Activated CD8-positive, alpha-beta T cell treated with anti-CD3 and anti-CD28 coated beads, Interleukin-2, amount 10 ng/mL, durations not matched to agents 7 days and 5 days (primary cell): ENCODE measurements at regions of chr9 and their contacts with region 1.

Region 1: DNA sequence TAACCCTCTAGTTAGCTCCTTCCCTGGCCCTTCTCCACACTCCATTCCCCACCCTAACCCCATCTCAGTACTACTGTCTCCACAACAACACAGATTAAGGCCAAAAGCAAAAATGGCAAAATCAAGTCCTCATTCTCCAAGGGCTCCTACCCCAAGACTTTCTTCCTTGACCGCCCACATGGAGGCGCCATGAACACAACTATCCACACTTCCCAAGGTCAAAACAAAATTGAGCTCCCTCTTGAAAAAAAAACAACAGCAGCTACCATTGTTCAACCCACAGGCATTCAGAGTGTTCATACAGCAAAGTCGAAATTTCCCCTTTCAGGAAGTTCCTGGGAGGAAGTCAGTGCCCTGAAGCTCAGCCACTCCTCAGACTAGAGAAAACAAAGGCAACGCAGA is 54.4 kb downstream of the GNAQ start:
- DNase-seq: peak; percentile 69
- ATAC-seq: peak; percentile 48
- H3K4me3 Mint-ChIP-seq: peak overlapping the region; percentile 9
- H3K27ac Mint-ChIP-seq: peak overlapping the region; percentile 67
- H3K4me1 Mint-ChIP-seq: peaks cover 56% of the 10 kb centered on the region
- H3K27me3 Mint-ChIP-seq: no peaks in the 10 kb centered on the region

Region 2: GRCh38 chr9:77949751-77950436 is 27.3 kb before region 1 on chr9:
- CTCF ChIA-PET with region 1: interaction called, 14 read pairs
- POLR2A ChIA-PET with region 1: no interaction called
- DNase-seq: no peak
- ATAC-seq: no peak
- H3K4me3 Mint-ChIP-seq: no peak overlapping the region
- H3K27ac Mint-ChIP-seq: no peak overlapping the region
- H3K4me1 Mint-ChIP-seq: peaks cover 15% of the 10 kb centered on the region
- H3K27me3 Mint-ChIP-seq: no peaks in the 10 kb centered on the region

Region 3: DNA sequence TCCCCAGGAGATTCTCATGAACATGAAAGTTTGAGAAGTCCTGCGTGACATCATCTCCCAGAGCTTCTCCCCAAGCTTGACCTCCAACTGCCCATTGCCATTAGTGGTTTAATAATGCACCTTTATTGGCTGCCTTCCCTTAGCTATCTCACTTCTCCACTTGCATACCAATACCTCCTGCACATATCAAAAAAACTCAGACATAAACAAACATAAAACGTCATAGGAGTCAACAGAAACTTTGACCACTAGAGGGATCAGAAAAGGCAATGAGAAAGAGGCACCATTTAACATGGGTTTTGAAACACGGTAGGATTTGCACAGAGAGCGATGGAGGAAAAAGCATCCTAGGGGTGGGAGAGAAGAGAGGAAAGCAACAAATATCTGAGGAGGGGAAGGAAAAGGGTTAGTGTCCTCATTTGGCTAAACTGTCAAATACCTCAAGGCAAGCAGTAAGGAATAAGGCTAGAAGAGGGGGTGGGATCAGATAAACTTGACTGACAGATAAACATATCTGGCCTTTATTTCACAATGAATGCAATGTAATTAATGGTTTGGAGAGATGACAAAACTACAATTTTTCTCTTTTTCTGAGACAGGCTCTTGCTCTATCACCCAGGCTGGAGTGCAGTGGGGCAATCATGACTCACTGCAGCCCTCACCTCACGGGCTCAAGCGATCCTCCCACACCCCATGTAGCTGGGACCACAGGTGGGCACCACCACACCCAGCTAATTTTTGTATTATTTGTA is 27.4 kb after region 1 on chr9:
- CTCF ChIA-PET with region 1: interaction called, 10 read pairs
- POLR2A ChIA-PET with region 1: no interaction called
- DNase-seq: no peak
- ATAC-seq: no peak
- H3K4me3 Mint-ChIP-seq: no peak overlapping the region
- H3K27ac Mint-ChIP-seq: no peak overlapping the region
- H3K4me1 Mint-ChIP-seq: peaks cover 43% of the 10 kb centered on the region
- H3K27me3 Mint-ChIP-seq: no peaks in the 10 kb centered on the region

Region 4: DNA sequence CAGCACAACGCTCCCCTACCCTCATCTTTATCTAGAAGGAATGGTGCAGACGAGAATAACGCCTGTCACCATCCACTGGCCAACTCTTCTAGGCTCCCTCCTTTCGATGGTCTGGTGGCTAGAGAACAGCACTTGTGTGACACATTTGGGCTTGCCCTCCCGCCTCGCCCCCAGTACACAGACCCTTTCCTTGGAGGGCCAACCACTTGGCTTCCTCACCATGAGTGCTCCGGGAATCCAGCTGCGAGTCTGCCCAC is 53.0 kb after region 1 on chr9:
- CTCF ChIA-PET with region 1: interaction called, 125 read pairs
- POLR2A ChIA-PET with region 1: interaction called, 20 read pairs
- DNase-seq: peak; percentile 42
- ATAC-seq: peak; percentile 17
- H3K4me3 Mint-ChIP-seq: peak overlapping the region; percentile 95
- H3K27ac Mint-ChIP-seq: peak overlapping the region; percentile 90
- H3K4me1 Mint-ChIP-seq: peaks cover 44% of the 10 kb centered on the region
- H3K27me3 Mint-ChIP-seq: no peaks in the 10 kb centered on the region

Region 5: GRCh38 chr9:78213712-78214111 is 236.5 kb after region 1 on chr9:
- CTCF ChIA-PET with region 1: interaction called, 16 read pairs
- POLR2A ChIA-PET with region 1: no interaction called
- DNase-seq: no peak
- ATAC-seq: peak; percentile 37
- H3K4me3 Mint-ChIP-seq: no peak overlapping the region
- H3K27ac Mint-ChIP-seq: no peak overlapping the region
- H3K4me1 Mint-ChIP-seq: peaks cover 38% of the 10 kb centered on the region
- H3K27me3 Mint-ChIP-seq: no peaks in the 10 kb centered on the region